BJ (cell line): ENCODE measurements at regions of chr6 and their contacts with region 1.

Region 1: DNA sequence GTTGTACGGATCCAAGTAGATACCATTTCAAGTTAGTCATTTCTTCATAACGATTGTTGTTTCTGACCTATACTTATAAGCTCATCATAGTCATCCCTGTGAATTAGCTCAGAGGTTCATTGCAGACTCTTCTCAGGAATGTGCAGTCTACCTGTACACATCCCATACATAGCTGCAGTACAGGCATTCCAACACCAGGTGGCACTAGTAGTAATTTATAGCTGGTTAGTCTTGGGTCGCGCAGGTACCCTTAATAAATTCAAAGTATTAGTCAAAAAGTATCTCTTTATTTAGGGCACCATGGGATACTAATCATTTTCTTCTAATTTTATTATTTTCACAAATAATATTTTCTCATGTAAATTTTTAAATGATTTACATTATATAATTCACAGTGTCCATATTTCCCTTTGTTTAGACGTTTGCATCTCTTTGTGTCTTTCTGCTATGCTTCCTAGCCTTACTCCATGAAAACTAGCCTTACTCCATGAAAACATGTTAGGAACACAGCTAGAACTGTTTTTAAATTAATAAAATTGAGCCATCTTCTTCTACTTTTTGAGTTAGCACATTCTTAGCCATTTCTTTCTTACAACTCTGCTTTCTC is 128.6 kb upstream of the FAM83B start:
- DNase-seq: no peak
- H3K4me3 ChIP-seq: no peak overlapping the region
- H3K27me3 ChIP-seq: no peaks in the 10 kb centered on the region
- CTCF ChIP-seq: peak; percentile 92

Region 2: GRCh38 chr6:53986165-53986720 is 731.7 kb before region 1 on chr6:
- CTCF ChIA-PET with region 1: interaction called, 26 read pairs
- POLR2A ChIA-PET with region 1: no interaction called
- DNase-seq: peak; percentile 24
- H3K4me3 ChIP-seq: no peak overlapping the region
- H3K27me3 ChIP-seq: no peaks in the 10 kb centered on the region
- CTCF ChIP-seq: peak; percentile 82

Region 3: GRCh38 chr6:54694928-54695532 is 22.9 kb before region 1 on chr6:
- CTCF ChIA-PET with region 1: interaction called, 11 read pairs
- POLR2A ChIA-PET with region 1: no interaction called
- DNase-seq: no peak
- H3K4me3 ChIP-seq: no peak overlapping the region
- H3K27me3 ChIP-seq: no peaks in the 10 kb centered on the region
- CTCF ChIP-seq: no peak

Region 4: GRCh38 chr6:54706844-54707605 is 10.9 kb before region 1 on chr6:
- CTCF ChIA-PET with region 1: interaction called, 31 read pairs
- POLR2A ChIA-PET with region 1: no interaction called
- DNase-seq: no peak
- H3K4me3 ChIP-seq: no peak overlapping the region
- H3K27me3 ChIP-seq: no peaks in the 10 kb centered on the region
- CTCF ChIP-seq: no peak

Region 5: GRCh38 chr6:54737247-54737646 is 19.3 kb after region 1 on chr6:
- CTCF ChIA-PET with region 1: interaction called, 11 read pairs
- POLR2A ChIA-PET with region 1: no interaction called
- DNase-seq: no peak
- H3K4me3 ChIP-seq: no peak overlapping the region
- H3K27me3 ChIP-seq: no peaks in the 10 kb centered on the region; the same call in 1 of the 2 replicates
- CTCF ChIP-seq: peak; percentile 34

Region 6: DNA sequence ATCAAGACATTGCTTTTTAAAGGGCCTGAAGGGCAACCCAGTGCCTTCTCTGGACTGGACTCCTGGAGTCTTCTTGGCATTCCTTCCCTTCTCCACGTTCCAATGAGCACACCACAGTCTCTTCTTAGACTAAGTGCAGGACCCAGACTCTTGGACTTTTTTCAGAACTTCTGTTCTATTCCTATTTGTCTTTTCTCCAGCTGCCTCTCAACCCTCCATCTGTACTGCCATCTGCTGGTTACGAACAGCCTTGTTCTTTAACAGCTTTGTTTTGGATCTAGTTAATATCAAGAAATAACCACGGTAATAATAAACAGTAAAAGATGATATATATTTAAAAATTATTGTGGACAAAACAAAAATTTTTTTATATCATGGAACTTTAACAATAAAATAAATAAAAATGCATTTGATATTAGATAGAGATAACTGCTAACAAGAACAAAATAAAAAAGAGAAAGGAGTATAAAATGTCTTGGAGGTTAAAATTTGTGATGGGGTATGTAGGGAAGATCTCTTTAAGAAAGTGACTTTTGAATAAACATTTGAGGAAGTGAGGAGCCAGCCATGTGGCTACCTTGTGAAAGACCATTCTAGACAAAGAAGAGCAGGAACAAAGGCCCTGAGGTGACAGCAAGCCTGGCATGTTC is 351.3 kb after region 1 on chr6:
- CTCF ChIA-PET with region 1: interaction called, 27 read pairs
- POLR2A ChIA-PET with region 1: no interaction called
- DNase-seq: no peak
- H3K4me3 ChIP-seq: no peak overlapping the region
- H3K27me3 ChIP-seq: no peaks in the 10 kb centered on the region
- CTCF ChIP-seq: peak; percentile 68